Caco-2 (cell line): ENCODE measurements at regions of chr2 and their contacts with region 1.

Region 1: GRCh38 chr2:47437287-47437686 is 34.3 kb downstream of the MSH2 start:
- DNase-seq: peak in 1 of 2 experiments; percentile 12
- H3K4me3 ChIP-seq: no peak overlapping the region
- H3K4me3 Mint-ChIP-seq: no peak overlapping the region
- H3K27ac Mint-ChIP-seq: no peak overlapping the region
- H3K4me1 ChIP-seq: 0 out of 2 replicates have a peak, but pooled peaks cover 3% of the 10 kb centered on the region
- H3K4me1 Mint-ChIP-seq: no peaks in the 10 kb centered on the region
- H3K27me3 ChIP-seq: no peaks in the 10 kb centered on the region
- H3K27me3 Mint-ChIP-seq: no peaks in the 10 kb centered on the region
- CTCF ChIP-seq: peak in 1 of 2 experiments; percentile 36

Region 2: DNA sequence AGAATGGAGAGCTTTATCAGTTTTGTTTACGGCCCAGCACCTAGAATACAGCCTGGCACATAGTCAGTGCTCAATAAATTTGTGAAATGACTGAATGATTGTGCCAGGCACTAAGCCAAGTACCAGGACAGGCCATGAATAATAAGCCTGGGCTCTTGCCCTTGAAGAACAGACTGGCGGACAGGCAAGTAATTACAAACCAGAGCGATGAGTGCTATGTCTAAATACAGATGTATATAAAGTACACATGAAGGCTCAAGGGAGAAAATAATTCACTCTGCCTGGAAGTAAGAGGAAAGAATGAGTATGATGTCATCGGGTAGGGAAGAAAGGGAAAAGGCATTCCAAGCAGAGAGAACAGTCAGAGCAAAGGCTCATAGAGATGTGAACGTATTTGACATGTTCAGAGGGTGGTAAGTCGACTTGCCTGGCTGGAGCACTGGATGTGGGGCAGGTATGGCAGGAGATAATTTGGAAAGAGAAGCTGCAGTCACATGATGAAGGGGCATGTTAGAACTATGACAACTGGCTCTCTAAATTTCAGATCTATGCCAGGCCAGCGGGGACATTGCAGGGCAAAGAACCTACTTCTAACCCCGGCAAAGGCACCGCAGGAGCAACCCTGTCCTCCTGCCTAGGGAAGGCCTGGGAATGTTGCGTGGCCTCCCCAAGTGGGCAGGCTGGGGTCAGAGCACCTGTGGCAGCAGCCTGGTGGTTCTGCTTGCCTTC is 163.1 kb before region 1 on chr2:
- CTCF ChIA-PET with region 1: no interaction called
- POLR2A ChIA-PET with region 1: no interaction called
- intact Hi-C with region 1: no loop called
- DNase-seq: no peak
- H3K4me3 ChIP-seq: no peak overlapping the region
- H3K4me3 Mint-ChIP-seq: no peak overlapping the region
- H3K27ac Mint-ChIP-seq: peak overlapping the region; percentile 7
- H3K4me1 ChIP-seq: peaks cover 34% of the 10 kb centered on the region
- H3K4me1 Mint-ChIP-seq: peaks cover 27% of the 10 kb centered on the region
- H3K27me3 ChIP-seq: no peaks in the 10 kb centered on the region
- H3K27me3 Mint-ChIP-seq: no peaks in the 10 kb centered on the region
- CTCF ChIP-seq: no peak

Region 3: GRCh38 chr2:47520825-47521665 is 83.8 kb after region 1 on chr2:
- CTCF ChIA-PET with region 1: interaction called, 3 read pairs
- POLR2A ChIA-PET with region 1: no interaction called
- intact Hi-C with region 1: loop called (anchors 2 kb)
- DNase-seq: peak; percentile 77 to 79
- H3K4me3 ChIP-seq: peak overlapping the region; percentile 45
- H3K4me3 Mint-ChIP-seq: peak overlapping the region; percentile 76
- H3K27ac Mint-ChIP-seq: no peak overlapping the region
- H3K4me1 ChIP-seq: no peaks in the 10 kb centered on the region
- H3K4me1 Mint-ChIP-seq: no peaks in the 10 kb centered on the region
- H3K27me3 ChIP-seq: no peaks in the 10 kb centered on the region
- H3K27me3 Mint-ChIP-seq: peaks cover 9% of the 10 kb centered on the region
- CTCF ChIP-seq: peak; percentile 50 to 55

Region 4: DNA sequence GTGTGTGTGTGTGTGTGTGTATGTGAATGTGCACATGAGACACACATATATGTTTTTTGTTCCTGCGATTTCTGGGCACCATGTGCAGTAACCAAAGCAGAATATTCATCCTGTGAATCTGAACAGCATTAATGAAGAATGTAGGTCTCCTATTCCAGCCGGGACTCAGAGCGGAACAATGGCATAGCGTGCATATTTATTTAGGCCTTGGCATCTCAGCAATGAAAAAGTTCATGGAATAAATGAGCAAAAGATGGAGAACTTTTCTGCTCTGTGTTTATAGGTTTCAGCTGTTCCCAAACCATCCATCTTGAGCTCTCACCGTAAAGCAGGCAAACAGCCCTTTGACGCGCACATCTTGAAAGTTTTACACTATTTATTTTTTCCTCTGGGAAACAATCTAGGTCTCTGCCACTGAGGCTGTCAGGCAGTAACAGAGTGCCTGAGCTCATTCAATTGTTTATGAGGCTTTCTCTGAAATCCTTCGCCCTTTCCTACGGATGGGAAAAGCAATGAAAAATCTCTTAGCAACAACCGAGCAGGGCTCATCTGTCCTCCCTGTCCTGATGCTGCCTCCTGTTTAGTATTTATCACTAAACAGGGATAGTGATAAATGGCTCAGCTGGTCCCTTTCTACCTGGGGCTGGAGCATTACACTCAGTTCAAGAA is 199.4 kb after region 1 on chr2:
- CTCF ChIA-PET with region 1: no interaction called
- POLR2A ChIA-PET with region 1: no interaction called
- intact Hi-C with region 1: loop called (anchors 5 kb)
- DNase-seq: no peak
- H3K4me3 ChIP-seq: no peak overlapping the region
- H3K4me3 Mint-ChIP-seq: no peak overlapping the region
- H3K27ac Mint-ChIP-seq: no peak overlapping the region
- H3K4me1 ChIP-seq: peaks cover 5% of the 10 kb centered on the region; the same call in 1 of the 2 replicates
- H3K4me1 Mint-ChIP-seq: no peaks in the 10 kb centered on the region
- H3K27me3 ChIP-seq: no peaks in the 10 kb centered on the region
- H3K27me3 Mint-ChIP-seq: peaks cover 4% of the 10 kb centered on the region
- CTCF ChIP-seq: no peak